Common myeloid progenitor, CD34-positive (primary cell): ENCODE measurements at regions of chr11 and their contacts with region 1.

Region 1: GRCh38 chr11:67583247-67584204 is at the start of gene GSTP1:
- DNase-seq: peak; percentile 88 to 96 (median 94)
- H3K4me3 ChIP-seq: peak within 1 kb of the TSS; percentile 48 to 84 (median 70)
- H3K27ac ChIP-seq: peak within 1 kb of the TSS; percentile 50 to 83
- H3K4me1 ChIP-seq: peaks cover 13 to 56% (median 50%) of the 10 kb centered on the region in 4 experiments
- H3K27me3 ChIP-seq: no peaks in the 10 kb centered on the region

Region 2: GRCh38 chr11:67600324-67601029 is 17.0 kb after region 1 on chr11:
- CTCF ChIA-PET with region 1: interaction called, 15 read pairs
- POLR2A ChIA-PET with region 1: interaction called, 6 read pairs
- DNase-seq: peak in 2 of 3 donors; percentile 83 to 89
- H3K4me3 ChIP-seq: peak overlapping the region in 5 of 7 experiments; percentile 0 to 63 (median 29)
- H3K27ac ChIP-seq: peak overlapping the region in 1 of 2 experiments; percentile 20
- H3K4me1 ChIP-seq: peaks cover 19 to 42% (median 27%) of the 10 kb centered on the region in 4 experiments
- H3K27me3 ChIP-seq: no peaks in the 10 kb centered on the region

Region 3: GRCh38 chr11:67613960-67614715 is 30.6 kb after region 1 on chr11:
- CTCF ChIA-PET with region 1: interaction called, 29 read pairs
- POLR2A ChIA-PET with region 1: interaction called, 4 read pairs
- DNase-seq: peak; percentile 80 to 96 (median 94)
- H3K4me3 ChIP-seq: peak overlapping the region in 5 of 7 experiments; percentile 29 to 71 (median 53)
- H3K27ac ChIP-seq: peak overlapping the region in 1 of 2 experiments; percentile 74
- H3K4me1 ChIP-seq: peaks cover 0 to 33% (median 32%) of the 10 kb centered on the region in 4 experiments
- H3K27me3 ChIP-seq: no peaks in the 10 kb centered on the region

Region 4: DNA sequence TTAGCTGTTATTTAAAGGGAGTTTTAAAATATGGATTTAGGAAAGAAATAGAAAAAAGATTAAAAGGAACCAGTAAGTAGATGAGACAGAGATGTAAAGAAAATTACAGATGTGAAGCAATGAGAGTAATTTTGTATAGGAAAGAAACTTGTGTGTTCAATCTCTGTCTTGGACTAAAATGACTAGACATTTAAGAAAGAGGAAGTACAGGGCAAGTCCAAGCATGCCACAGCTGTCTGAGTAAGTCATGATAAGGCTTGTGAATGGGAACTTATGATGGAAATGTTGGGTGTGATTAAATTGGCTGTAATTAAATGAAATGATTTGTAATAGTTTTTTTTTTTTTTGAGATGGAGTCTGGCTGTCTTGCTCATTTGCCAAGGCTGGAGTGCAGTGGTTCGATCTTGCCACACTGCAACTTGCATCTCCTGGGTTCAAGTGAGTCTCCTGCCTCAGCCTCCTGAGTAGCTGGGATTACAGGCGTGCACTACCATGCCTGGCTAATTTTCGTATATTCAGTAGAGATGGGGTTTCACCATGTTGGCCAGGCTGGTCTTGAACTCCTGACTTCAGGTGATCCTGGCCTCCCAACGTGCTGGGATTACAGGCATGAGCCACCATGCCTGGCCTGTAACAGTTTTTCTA is 72.9 kb after region 1 on chr11:
- CTCF ChIA-PET with region 1: interaction called, 11 read pairs
- POLR2A ChIA-PET with region 1: no interaction called
- DNase-seq: peak; percentile 82 to 96 (median 93)
- H3K4me3 ChIP-seq: no peak overlapping the region
- H3K27ac ChIP-seq: no peak overlapping the region
- H3K4me1 ChIP-seq: peaks cover 5 to 24% (median 15%) of the 10 kb centered on the region in 4 experiments
- H3K27me3 ChIP-seq: no peaks in the 10 kb centered on the region